Activated CD8-positive, alpha-beta T cell treated with anti-CD3 and anti-CD28 coated beads for 36 hours (primary cell): ENCODE measurements at regions of chr3 and their contacts with region 1.

Region 1: DNA sequence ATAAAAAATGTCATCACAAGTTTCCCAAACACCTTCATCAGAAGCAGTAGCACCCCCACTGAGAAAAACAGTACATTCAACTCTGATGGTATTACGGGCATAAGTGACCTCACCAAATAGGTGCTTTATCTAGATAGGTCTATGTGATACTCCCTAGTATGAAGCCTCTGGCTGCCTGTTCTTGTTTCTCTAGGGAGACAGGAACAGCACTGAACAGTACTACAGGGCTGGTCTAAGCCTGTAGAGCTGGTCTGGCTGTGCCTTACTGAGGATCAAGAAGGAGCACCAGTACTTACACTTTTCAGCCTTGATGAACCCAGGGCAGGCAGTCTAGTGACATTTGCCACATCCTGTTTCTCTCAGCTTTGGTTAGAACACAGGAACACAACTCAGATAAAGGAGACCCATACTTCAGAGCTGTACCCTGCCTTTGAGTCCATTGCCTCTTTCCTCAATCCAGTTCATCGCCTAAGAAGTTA is 35.9 kb downstream of the OXNAD1 start:
- DNase-seq: peak; percentile 69
- ATAC-seq: peak; percentile 64
- H3K4me3 Mint-ChIP-seq: peak overlapping the region; percentile 73
- H3K27ac Mint-ChIP-seq: peak overlapping the region; percentile 95
- H3K4me1 Mint-ChIP-seq: peaks cover 94% of the 10 kb centered on the region
- H3K27me3 Mint-ChIP-seq: no peaks in the 10 kb centered on the region
- CTCF ChIP-seq: no peak

Region 2: GRCh38 chr3:16311960-16312451 is 11.1 kb after region 1 on chr3:
- CTCF ChIA-PET with region 1: interaction called, 274 read pairs
- POLR2A ChIA-PET with region 1: interaction called, 61 read pairs
- intact Hi-C with region 1: no loop called
- DNase-seq: peak; percentile 62
- ATAC-seq: peak; percentile 38
- H3K4me3 Mint-ChIP-seq: peak overlapping the region; percentile 46
- H3K27ac Mint-ChIP-seq: peak overlapping the region; percentile 91
- H3K4me1 Mint-ChIP-seq: peaks cover 88% of the 10 kb centered on the region
- H3K27me3 Mint-ChIP-seq: no peaks in the 10 kb centered on the region
- CTCF ChIP-seq: no peak

Region 3: DNA sequence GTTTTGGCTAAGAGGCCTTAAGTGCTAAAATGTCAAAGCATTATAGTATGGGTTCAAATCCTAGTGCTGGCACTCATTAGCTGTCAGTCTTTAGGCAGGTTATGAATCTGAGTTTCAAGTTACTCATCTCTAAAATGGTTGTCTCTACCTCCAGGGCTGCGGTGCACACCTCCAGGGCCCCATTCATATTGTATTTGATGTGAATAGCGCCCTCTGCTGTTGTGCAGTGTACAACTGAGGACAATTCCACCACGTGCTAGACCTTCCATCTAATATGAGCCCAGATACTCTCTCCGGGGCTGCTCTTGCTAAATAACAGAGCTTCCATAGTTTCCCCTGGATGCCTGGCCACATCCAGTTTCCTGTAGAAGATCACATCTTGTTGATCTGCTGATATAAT is 18.4 kb after region 1 on chr3:
- CTCF ChIA-PET with region 1: interaction called, 274 read pairs
- POLR2A ChIA-PET with region 1: interaction called, 61 read pairs
- intact Hi-C with region 1: no loop called
- DNase-seq: peak; percentile 97
- ATAC-seq: peak; percentile 92
- H3K4me3 Mint-ChIP-seq: peak overlapping the region; percentile 21
- H3K27ac Mint-ChIP-seq: peak overlapping the region; percentile 96
- H3K4me1 Mint-ChIP-seq: peaks cover 78% of the 10 kb centered on the region
- H3K27me3 Mint-ChIP-seq: no peaks in the 10 kb centered on the region
- CTCF ChIP-seq: peak; percentile 69